Upper lobe of right lung (tissue), 1 donor: ENCODE measurements at regions of chr20 and their contacts with region 1.

Region 1: GRCh38 chr20:63782051-63782471 is 42.5 kb downstream of the SLC2A4RG start:
- DNase-seq: no peak
- ATAC-seq: no peak
- H3K4me3 ChIP-seq: no peak overlapping the region
- H3K27ac ChIP-seq: no peak overlapping the region
- H3K4me1 ChIP-seq: no peaks in the 10 kb centered on the region
- H3K27me3 ChIP-seq: no peaks in the 10 kb centered on the region
- CTCF ChIP-seq: no peak

Region 2: GRCh38 chr20:63864847-63865640 is 83.0 kb after region 1 on chr20 and contains the start of gene TPD52L2:
- intact Hi-C with region 1: loop called (anchors 5 kb)
- DNase-seq: peak; percentile 99
- ATAC-seq: peak; percentile 93
- H3K4me3 ChIP-seq: peak within 1 kb of the TSS; percentile 82
- H3K27ac ChIP-seq: peak within 1 kb of the TSS; percentile 94
- H3K4me1 ChIP-seq: peaks cover 24% of the 10 kb centered on the region
- H3K27me3 ChIP-seq: no peaks in the 10 kb centered on the region
- CTCF ChIP-seq: no peak
- total RNA-seq, gene TPD52L2: 81.5 TPM

Region 3: DNA sequence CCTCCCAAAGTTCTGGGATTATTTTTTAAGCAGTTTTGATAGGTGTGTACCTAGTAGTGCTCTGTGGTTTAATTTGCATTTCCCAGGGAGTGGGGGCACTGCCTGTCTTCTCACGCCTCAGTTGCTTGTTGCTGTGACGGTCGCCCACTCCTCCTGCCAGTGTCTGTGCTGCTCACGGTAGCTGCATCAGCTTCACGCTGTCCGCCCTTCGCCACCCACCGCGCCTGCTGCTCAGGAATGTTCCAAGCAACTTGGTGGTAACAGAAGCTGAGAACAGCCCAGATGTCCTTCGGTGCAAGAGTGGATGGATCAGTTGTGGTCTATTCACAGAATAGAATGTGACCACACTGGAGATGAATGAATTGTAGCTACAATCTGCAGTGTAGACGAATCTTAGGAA is 135.8 kb after region 1 on chr20:
- intact Hi-C with region 1: no loop called
- DNase-seq: no peak
- ATAC-seq: no peak
- H3K4me3 ChIP-seq: no peak overlapping the region
- H3K27ac ChIP-seq: no peak overlapping the region
- H3K4me1 ChIP-seq: no peaks in the 10 kb centered on the region
- H3K27me3 ChIP-seq: no peaks in the 10 kb centered on the region
- CTCF ChIP-seq: no peak